ENCODE measurements at regions of chr3 and their contacts with region 1.

Region 1: DNA sequence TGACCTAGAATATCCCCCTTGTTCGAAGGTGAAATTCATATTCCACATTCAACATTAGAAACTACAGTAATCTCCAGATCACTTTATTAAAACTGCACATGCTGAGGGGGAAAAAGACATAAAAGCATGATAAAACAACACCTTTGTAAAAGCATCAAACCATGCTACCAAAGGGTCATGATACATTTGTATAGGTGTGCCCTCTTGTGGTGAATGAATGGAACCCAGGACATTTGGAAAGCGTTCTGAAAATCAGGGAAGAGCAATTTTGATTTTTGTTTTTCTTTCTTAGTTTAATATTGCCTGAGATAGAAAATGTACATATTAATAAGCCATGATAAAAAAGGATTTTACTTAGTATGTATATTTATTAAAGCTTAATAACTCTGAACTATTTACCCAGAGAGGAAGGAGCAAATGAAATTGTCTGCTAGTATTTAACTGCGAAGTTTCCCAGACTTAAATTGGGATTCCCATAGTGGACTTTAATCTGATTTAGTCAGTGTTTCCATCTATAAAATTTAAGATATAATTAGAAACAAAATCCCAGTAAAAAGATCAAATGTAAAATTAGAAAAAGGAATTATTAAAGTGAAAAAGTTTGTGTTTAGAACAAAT is 105.8 kb upstream of the ARL6 start:
- DNase-seq: no peak
- H3K4me3 Mint-ChIP-seq: no peak overlapping the region
- H3K27ac Mint-ChIP-seq: no peak overlapping the region
- H3K4me1 Mint-ChIP-seq: no peaks in the 10 kb centered on the region
- H3K27me3 Mint-ChIP-seq: peaks cover 2% of the 10 kb centered on the region

Region 2: DNA sequence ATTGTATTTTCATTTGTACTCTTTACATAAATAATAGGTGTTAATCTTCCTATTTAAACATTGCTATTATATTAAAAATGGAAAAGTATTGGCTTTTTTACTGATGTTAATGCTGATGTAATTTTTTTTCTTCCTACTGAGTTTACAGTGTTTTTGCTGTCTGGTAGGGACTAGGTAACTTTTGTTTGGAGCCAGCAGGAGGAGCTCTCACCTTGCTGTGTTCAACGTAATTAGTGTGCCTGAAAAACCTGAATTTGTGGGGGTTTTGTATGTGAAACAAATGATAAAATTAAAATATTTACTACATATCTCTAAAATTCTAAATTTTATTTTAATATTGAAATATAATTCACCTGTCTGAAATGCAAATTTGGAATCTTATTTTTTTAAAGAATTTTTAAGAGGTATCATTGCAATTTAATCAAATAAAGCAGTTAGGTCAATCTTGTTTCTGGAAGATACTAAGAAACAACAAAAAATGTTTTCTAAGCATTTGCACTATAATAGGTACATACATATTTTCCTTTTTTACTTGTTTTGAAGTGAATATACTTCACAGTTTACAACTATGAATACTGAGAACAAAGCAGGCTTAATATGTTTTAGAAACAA is 795.5 kb before region 1 on chr3:
- intact Hi-C with region 1: loop called (anchors 5 kb)
- DNase-seq: no peak
- H3K4me3 Mint-ChIP-seq: no peak overlapping the region
- H3K27ac Mint-ChIP-seq: no peak overlapping the region
- H3K4me1 Mint-ChIP-seq: no peaks in the 10 kb centered on the region
- H3K27me3 Mint-ChIP-seq: no peaks in the 10 kb centered on the region

Measured in activated T-helper 1 cell treated with anti-CD3 and anti-CD28 coated beads, Interleukin-12 subunit alpha, Interleukin-12 subunit beta, Interleukin-2, Interleukin-4 antibody, amounts not matched to agents 30 ng/mL and 10 ng/mL and 1 ng/mL, durations not matched to agents 14 hours and 24 hours and 36 hours (primary cell).